Mammary epithelial cell (primary cell): ENCODE measurements at regions of chr1 and their contacts with region 1.

Region 1: GRCh38 chr1:155847823-155848529 is 9.0 kb downstream of the GON4L start:
- DNase-seq: no peak
- H3K4me3 ChIP-seq: no peak overlapping the region
- H3K27ac ChIP-seq: no peak overlapping the region
- H3K4me1 ChIP-seq: no peaks in the 10 kb centered on the region
- H3K27me3 ChIP-seq: no peaks in the 10 kb centered on the region
- CTCF ChIP-seq: no peak

Region 2: DNA sequence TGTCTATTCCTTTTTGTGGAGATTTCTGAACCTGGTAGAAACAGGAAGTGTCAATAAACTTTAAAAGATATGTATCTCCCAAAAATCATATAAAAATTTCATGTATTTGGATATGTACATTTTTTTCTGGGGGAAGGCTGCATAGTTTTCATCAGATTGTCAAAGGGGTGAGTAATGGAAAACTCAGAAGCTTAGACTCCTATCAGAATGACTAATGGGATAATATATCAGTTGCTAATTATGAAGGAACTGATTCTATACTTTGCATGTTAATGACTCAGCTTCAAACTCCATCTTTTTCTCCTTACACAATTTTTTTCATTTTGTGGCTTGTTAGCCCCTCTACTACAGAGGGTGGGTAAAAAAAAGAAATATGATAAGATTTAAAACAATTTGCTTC is 46.8 kb before region 1 on chr1:
- CTCF ChIA-PET with region 1: no interaction called
- dilution Hi-C with region 1: loop called (anchors 5 kb)
- in situ Hi-C with region 1: no loop called
- intact Hi-C with region 1: no loop called
- DNase-seq: peak; percentile 32
- H3K4me3 ChIP-seq: no peak overlapping the region
- H3K27ac ChIP-seq: no peak overlapping the region
- H3K4me1 ChIP-seq: no peaks in the 10 kb centered on the region
- H3K27me3 ChIP-seq: no peaks in the 10 kb centered on the region
- CTCF ChIP-seq: no peak

Region 3: GRCh38 chr1:155893389-155894142 is 45.6 kb after region 1 on chr1:
- CTCF ChIA-PET with region 1: no interaction called
- dilution Hi-C with region 1: loop called (anchors 5 kb)
- in situ Hi-C with region 1: no loop called
- intact Hi-C with region 1: no loop called
- DNase-seq: peak; percentile 75
- H3K4me3 ChIP-seq: no peak overlapping the region
- H3K27ac ChIP-seq: peak overlapping the region; percentile 63
- H3K4me1 ChIP-seq: peaks cover 20% of the 10 kb centered on the region
- H3K27me3 ChIP-seq: no peaks in the 10 kb centered on the region
- CTCF ChIP-seq: no peak